Aorta (tissue), 5 donors: ENCODE measurements at regions of chr11 and their contacts with region 1.

Region 1: GRCh38 chr11:86021377-86021776 is 47.5 kb downstream of the PICALM start:
- DNase-seq: no peak
- ATAC-seq: no peak
- H3K4me3 ChIP-seq: no peak overlapping the region
- H3K27ac ChIP-seq: no peak overlapping the region
- H3K4me1 ChIP-seq: no peaks in the 10 kb centered on the region
- H3K27me3 ChIP-seq: no peaks in the 10 kb centered on the region

Region 2: GRCh38 chr11:85965202-85965601 is 56.2 kb before region 1 on chr11:
- intact Hi-C with region 1: loop called in 1 of 2 experiments (anchors 5 kb)
- DNase-seq: no peak
- ATAC-seq: no peak
- H3K4me3 ChIP-seq: no peak overlapping the region
- H3K27ac ChIP-seq: no peak overlapping the region
- H3K4me1 ChIP-seq: no peaks in the 10 kb centered on the region
- H3K27me3 ChIP-seq: no peaks in the 10 kb centered on the region